Mammary epithelial cell (primary cell): ENCODE measurements at regions of chr14 and their contacts with region 1.

Region 1: GRCh38 chr14:76876076-76876475 is 49.9 kb downstream of the LRRC74A start:
- DNase-seq: peak; percentile 63
- H3K4me3 ChIP-seq: no peak overlapping the region
- H3K27ac ChIP-seq: no peak overlapping the region
- H3K4me1 ChIP-seq: no peaks in the 10 kb centered on the region
- H3K27me3 ChIP-seq: no peaks in the 10 kb centered on the region
- CTCF ChIP-seq: peak; percentile 96 to 98

Region 2: GRCh38 chr14:76844223-76844622 is 31.9 kb before region 1 on chr14:
- CTCF ChIA-PET with region 1: no interaction called
- dilution Hi-C with region 1: no loop called
- in situ Hi-C with region 1: no loop called
- intact Hi-C with region 1: no loop called
- DNase-seq: no peak
- H3K4me3 ChIP-seq: no peak overlapping the region
- H3K27ac ChIP-seq: no peak overlapping the region
- H3K4me1 ChIP-seq: no peaks in the 10 kb centered on the region
- H3K27me3 ChIP-seq: no peaks in the 10 kb centered on the region
- CTCF ChIP-seq: peak in 1 of 2 donors; percentile 21

Region 3: GRCh38 chr14:76863724-76864407 is 12.2 kb before region 1 on chr14:
- CTCF ChIA-PET with region 1: interaction called, 11 read pairs
- dilution Hi-C with region 1: no loop called
- in situ Hi-C with region 1: no loop called
- intact Hi-C with region 1: no loop called
- DNase-seq: no peak
- H3K4me3 ChIP-seq: no peak overlapping the region
- H3K27ac ChIP-seq: no peak overlapping the region
- H3K4me1 ChIP-seq: no peaks in the 10 kb centered on the region
- H3K27me3 ChIP-seq: peaks cover 2% of the 10 kb centered on the region
- CTCF ChIP-seq: no peak

Region 4: DNA sequence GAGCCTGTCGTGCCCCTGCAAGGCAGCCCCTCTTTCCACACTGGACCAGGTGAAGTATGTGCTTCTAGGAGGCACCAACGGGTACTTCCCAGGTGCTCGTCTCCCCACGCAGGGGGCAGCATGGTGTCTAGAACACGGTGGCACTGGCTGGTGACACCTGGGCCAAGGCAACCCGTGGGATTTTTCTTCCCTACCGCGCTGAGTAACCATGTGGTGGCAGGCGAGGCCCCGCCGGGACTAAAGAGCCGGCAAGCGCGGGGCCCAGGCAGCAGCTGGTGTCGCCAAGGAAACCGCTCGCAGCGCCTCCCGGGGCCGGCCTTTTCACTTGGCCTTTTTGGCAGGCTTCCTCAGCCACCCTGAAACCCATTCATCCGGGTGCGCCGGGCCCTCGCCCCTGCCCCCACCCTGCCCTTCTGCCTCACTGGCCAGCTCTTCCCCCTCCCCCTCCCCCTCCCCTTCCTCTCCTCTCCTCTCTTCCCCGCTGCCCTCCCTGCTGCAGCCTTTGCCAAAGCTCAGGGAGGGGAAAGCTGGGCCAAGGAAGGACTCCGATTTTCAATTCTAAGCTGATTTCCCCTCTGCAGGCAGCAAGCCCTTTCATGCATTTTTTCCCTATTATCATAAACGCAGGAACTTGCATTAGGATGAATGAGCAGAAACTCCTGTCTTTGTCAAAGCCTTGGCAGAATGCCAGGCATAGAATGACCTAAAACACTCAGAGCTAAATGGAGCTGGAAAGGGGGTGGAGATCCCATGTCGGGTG is 71.2 kb after region 1 on chr14:
- CTCF ChIA-PET with region 1: no interaction called
- dilution Hi-C with region 1: no loop called
- in situ Hi-C with region 1: no loop called
- intact Hi-C with region 1: loop called (anchors 2 kb)
- DNase-seq: peak; percentile 83
- H3K4me3 ChIP-seq: no peak overlapping the region
- H3K27ac ChIP-seq: peak overlapping the region; percentile 58
- H3K4me1 ChIP-seq: peaks cover 45% of the 10 kb centered on the region
- H3K27me3 ChIP-seq: no peaks in the 10 kb centered on the region
- CTCF ChIP-seq: peak; percentile 16 to 74

Region 5: GRCh38 chr14:77043177-77043983 is 167.3 kb after region 1 on chr14:
- CTCF ChIA-PET with region 1: no interaction called
- dilution Hi-C with region 1: no loop called
- in situ Hi-C with region 1: no loop called
- intact Hi-C with region 1: no loop called
- DNase-seq: peak; percentile 94
- H3K4me3 ChIP-seq: peak overlapping the region in 1 of 3 experiments; percentile 3
- H3K27ac ChIP-seq: peak overlapping the region; percentile 97
- H3K4me1 ChIP-seq: peaks cover 80% of the 10 kb centered on the region
- H3K27me3 ChIP-seq: no peaks in the 10 kb centered on the region
- CTCF ChIP-seq: no peak

Region 6: DNA sequence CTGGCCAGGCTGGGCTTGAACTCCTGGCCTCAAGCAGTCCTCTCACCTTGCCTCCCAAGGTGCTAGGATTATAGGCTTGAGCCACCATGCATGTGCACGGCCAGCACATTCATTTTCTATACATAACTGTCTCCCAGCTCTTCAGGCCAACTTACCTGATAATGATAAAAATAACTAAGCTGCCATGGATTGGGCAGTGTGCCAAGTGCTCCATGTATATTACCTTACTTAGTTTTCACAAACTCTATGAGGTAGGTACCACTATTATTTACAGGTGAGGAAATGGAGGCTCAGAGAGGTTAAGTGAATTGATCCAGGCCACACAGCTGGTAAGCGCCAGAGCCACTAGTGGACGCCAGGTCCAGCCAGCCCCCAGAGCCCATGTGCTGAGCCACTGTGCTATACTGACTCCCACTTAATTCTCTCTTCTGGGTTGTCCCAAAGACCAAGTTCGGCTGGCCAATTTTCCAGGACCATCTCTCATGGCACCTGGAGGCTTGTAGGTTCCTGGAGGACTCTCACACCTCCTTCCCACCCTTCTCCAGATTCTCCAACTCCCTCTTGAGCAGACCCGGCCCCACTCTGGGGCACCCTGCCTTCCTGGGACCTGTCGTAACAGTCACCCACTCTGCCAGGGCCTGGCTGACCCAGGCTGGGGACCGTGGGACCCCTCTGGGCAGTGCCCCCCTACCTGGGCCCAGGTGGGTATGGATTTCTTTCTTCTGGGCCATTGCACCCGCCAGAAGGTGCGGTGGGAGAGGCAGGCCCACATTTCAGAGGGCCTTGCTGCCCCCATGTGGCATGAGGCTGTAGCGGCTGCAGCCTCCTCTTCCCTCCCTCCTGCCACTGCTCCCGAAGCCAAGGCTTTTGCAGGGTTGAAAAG is 191.8 kb after region 1 on chr14:
- CTCF ChIA-PET with region 1: interaction called, 10 read pairs
- dilution Hi-C with region 1: no loop called
- in situ Hi-C with region 1: loop called (anchors 5 to 10 kb)
- intact Hi-C with region 1: loop called (anchors 1 kb)
- DNase-seq: peak; percentile 54
- H3K4me3 ChIP-seq: no peak overlapping the region
- H3K27ac ChIP-seq: no peak overlapping the region
- H3K4me1 ChIP-seq: peaks cover 16% of the 10 kb centered on the region
- H3K27me3 ChIP-seq: no peaks in the 10 kb centered on the region
- CTCF ChIP-seq: peak; percentile 93 to 97

Region 7: DNA sequence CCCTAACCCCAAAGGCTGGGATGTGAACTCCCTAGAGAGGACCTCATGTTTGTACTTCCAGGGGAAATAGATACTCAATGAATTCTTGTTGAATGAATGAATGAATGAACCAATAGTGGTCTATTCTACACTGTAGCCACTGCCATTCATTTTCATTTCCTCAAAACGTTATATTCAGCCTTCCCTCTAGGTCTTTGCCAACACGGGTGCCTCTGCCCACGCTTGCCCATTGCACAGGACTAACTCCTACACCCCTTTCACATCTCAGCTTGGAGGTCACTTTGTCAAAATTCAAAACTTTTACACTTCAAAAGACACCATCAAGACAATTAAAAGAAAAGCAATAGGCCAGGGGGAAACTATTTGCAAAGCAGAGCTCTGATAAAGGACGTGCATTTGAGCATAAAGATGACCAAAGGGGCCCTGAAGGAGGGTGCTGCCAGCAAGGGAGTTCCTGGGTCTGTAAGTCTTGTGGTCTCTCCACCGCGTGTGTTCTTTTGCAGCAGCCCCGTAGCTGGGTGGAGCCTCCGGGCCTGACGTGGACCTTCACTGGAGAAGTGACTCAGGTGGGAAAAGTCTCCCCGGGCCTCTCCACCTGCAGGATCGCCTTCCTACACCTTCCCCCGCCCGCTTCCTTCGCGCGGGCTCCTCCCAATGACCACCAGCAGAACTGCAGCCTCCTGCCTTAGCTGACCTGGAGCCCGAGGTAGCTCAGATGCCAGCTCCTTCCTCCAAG is 337.0 kb after region 1 on chr14:
- CTCF ChIA-PET with region 1: no interaction called
- dilution Hi-C with region 1: no loop called
- in situ Hi-C with region 1: no loop called
- intact Hi-C with region 1: loop called (anchors 2 kb)
- DNase-seq: peak; percentile 60
- H3K4me3 ChIP-seq: no peak overlapping the region
- H3K27ac ChIP-seq: no peak overlapping the region
- H3K4me1 ChIP-seq: no peaks in the 10 kb centered on the region
- H3K27me3 ChIP-seq: peaks cover 3% of the 10 kb centered on the region
- CTCF ChIP-seq: peak; percentile 81 to 97